IMR-90 (cell line): ENCODE measurements at regions of chr3 and their contacts with region 1.

Region 1: GRCh38 chr3:97821810-97822775 is at the start of gene CRYBG3:
- DNase-seq: peak; percentile 75
- ATAC-seq: peak; percentile 98
- H3K4me3 ChIP-seq: peak within 1 kb of the TSS; percentile 83
- H3K27ac ChIP-seq: peak within 1 kb of the TSS; percentile 64
- H3K4me1 ChIP-seq: peaks cover 3% of the 10 kb centered on the region
- H3K27me3 ChIP-seq: 0 out of 2 replicates have a peak, but pooled peaks cover 2% of the 10 kb centered on the region
- CTCF ChIP-seq: peak; percentile 31; the same call in 1 of the 2 replicates
- POLR2A ChIP-seq: peak; percentile 81; the same call in 1 of the 2 replicates
- RAD21 ChIP-seq: no peak
- total RNA-seq, gene CRYBG3: 23.9 and 26.2 TPM in 2 replicates

Region 2: DNA sequence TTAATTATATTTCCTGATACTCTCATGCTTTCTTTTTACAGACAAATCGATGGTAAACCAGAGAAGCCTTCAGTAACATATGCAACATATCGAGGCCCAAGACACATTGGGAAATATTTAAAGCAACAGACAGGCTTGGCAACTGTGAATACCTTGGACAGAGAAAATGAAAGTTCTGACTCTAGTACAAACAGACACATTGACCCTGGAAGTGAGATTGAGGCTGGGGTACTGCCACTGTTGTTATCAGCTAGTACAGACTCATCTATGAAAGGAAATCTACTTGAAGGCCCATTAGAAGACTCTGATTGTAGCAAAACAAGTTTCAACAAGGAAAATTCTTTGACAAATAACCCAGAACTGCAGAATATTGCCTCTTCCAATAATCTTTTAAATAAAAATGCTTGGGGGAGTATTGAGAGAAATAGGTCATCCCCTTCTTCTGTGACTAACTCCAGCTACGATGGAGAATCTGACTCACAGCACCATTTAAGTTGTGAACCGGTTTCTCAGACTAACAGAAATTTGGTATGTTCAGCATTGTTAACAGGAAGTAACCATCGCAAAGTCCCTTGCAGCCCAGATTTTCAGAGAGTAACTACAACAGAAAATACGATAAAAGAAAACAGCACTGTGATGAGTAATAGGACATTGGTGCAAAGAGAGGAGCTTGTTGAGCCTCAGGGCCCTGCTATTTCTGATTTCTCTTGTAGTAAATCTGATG is 49.9 kb after region 1 on chr3:
- CTCF ChIA-PET with region 1: no interaction called
- POLR2A ChIA-PET with region 1: no interaction called
- dilution Hi-C with region 1: no loop called
- in situ Hi-C with region 1: no loop called
- intact Hi-C with region 1: loop called (anchors 2 kb)
- DNase-seq: peak; percentile 97
- ATAC-seq: peak; percentile 95
- H3K4me3 ChIP-seq: no peak overlapping the region
- H3K27ac ChIP-seq: no peak overlapping the region
- H3K4me1 ChIP-seq: peaks cover 2% of the 10 kb centered on the region; the same call in 1 of the 2 replicates
- H3K27me3 ChIP-seq: no peaks in the 10 kb centered on the region
- CTCF ChIP-seq: no peak
- POLR2A ChIP-seq: no peak
- RAD21 ChIP-seq: no peak

Region 3: GRCh38 chr3:97927654-97928053 is 105.6 kb after region 1 on chr3:
- CTCF ChIA-PET with region 1: no interaction called
- POLR2A ChIA-PET with region 1: no interaction called
- dilution Hi-C with region 1: no loop called
- in situ Hi-C with region 1: no loop called
- intact Hi-C with region 1: loop called (anchors 5 kb)
- DNase-seq: peak; percentile 66
- ATAC-seq: peak; percentile 92
- H3K4me3 ChIP-seq: no peak overlapping the region
- H3K27ac ChIP-seq: no peak overlapping the region
- H3K4me1 ChIP-seq: no peaks in the 10 kb centered on the region; the same call in 1 of the 2 replicates
- H3K27me3 ChIP-seq: no peaks in the 10 kb centered on the region
- CTCF ChIP-seq: no peak
- POLR2A ChIP-seq: no peak
- RAD21 ChIP-seq: no peak

Region 4: DNA sequence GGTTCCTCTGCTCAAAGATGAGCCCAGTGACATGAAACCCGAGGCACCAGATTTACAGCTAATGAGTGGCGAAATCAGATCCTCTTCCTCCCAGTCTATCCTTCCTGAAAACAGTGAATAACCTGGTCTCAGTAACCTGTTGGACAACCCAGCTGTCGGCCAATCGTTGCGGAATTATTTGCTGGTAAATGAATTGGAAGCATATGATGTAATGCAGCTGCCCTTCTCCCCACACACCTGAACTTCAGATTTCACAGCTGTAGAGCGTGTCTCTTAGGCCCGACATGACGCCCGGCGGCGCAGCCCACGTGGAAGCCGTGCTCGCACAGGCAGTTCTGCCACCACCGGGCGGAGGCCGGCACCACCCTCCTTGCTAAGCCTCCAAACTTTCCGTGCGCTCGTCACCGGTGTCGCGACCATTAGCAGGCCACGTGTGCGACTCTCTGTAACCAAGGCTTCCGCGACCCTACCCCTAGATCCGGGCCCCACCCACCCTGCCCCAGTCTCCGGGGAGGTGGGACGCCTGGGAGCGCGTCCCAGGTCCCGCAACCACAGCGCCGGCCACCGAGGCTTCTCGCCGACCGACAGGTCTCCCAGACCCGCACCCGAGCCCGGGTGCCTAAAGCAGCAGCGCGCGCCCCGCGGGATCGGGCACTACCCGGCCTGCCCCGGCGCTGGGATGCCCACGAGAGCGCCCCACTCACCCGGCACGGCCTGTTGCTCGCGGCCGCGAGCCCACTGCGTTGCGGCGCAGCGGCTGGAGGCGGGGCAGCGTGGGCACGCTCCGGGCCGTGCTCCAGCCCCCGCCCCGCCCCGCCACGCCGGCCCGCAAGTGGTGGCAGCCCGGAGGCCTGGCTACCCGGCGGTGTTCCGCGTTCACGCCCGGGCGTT is 149.8 kb after region 1 on chr3 and contains the start of gene RIOX2:
- CTCF ChIA-PET with region 1: no interaction called
- POLR2A ChIA-PET with region 1: no interaction called
- dilution Hi-C with region 1: no loop called
- in situ Hi-C with region 1: no loop called
- intact Hi-C with region 1: loop called (anchors 2 kb)
- DNase-seq: peak; percentile 62
- ATAC-seq: peak; percentile 96
- H3K4me3 ChIP-seq: peak within 1 kb of the TSS; percentile 82
- H3K27ac ChIP-seq: peak within 1 kb of the TSS; percentile 57
- H3K4me1 ChIP-seq: peaks cover 9% of the 10 kb centered on the region
- H3K27me3 ChIP-seq: no peaks in the 10 kb centered on the region
- CTCF ChIP-seq: no peak
- POLR2A ChIP-seq: no peak; the same call in 1 of the 2 replicates
- RAD21 ChIP-seq: no peak
- total RNA-seq, gene RIOX2: 26.7 and 27.8 TPM in 2 replicates

Region 5: GRCh38 chr3:98022978-98023820 is 201.1 kb after region 1 on chr3:
- CTCF ChIA-PET with region 1: interaction called, 4 read pairs
- POLR2A ChIA-PET with region 1: interaction called, 12 read pairs
- dilution Hi-C with region 1: loop called (anchors 25 kb)
- in situ Hi-C with region 1: no loop called
- intact Hi-C with region 1: loop called (anchors 1 kb)
- DNase-seq: peak; percentile 68
- ATAC-seq: peak; percentile 87
- H3K4me3 ChIP-seq: no peak overlapping the region
- H3K27ac ChIP-seq: no peak overlapping the region
- H3K4me1 ChIP-seq: no peaks in the 10 kb centered on the region
- H3K27me3 ChIP-seq: peaks cover 4% of the 10 kb centered on the region
- CTCF ChIP-seq: peak; percentile 96
- POLR2A ChIP-seq: 0 out of 2 replicates have a peak, but pooled peaks have one; percentile 42
- RAD21 ChIP-seq: peak; percentile 97

Region 6: GRCh38 chr3:98593046-98593936 is 771.2 kb after region 1 on chr3 and contains the start of gene CPOX:
- CTCF ChIA-PET with region 1: no interaction called
- POLR2A ChIA-PET with region 1: no interaction called
- dilution Hi-C with region 1: no loop called
- in situ Hi-C with region 1: loop called (anchors 25 kb)
- intact Hi-C with region 1: no loop called
- DNase-seq: peak; percentile 88
- ATAC-seq: peak; percentile 98
- H3K4me3 ChIP-seq: peak within 1 kb of the TSS; percentile 81
- H3K27ac ChIP-seq: peak within 1 kb of the TSS; percentile 65
- H3K4me1 ChIP-seq: peaks cover 2% of the 10 kb centered on the region; the same call in 1 of the 2 replicates
- H3K27me3 ChIP-seq: no peaks in the 10 kb centered on the region
- CTCF ChIP-seq: no peak
- POLR2A ChIP-seq: no peak
- RAD21 ChIP-seq: no peak
- total RNA-seq, gene CPOX: 14.5 and 20.3 TPM in 2 replicates